Heart left ventricle (tissue), 16 donors: ENCODE measurements at regions of chr1 and their contacts with region 1.

Region 1: GRCh38 chr1:35769759-35770446 is at the start of gene CLSPN:
- DNase-seq: peak; percentile 95 to 96 (median 96)
- ATAC-seq: peak; percentile 99 to 100 (median 99)
- H3K4me3 ChIP-seq: peak within 1 kb of the TSS; percentile 59 to 97 (median 86)
- H3K27ac ChIP-seq: peak within 1 kb of the TSS in 11 of 12 donors; percentile 39 to 91 (median 77)
- H3K4me1 ChIP-seq: peaks cover 0 to 18% (median 4%) of the 10 kb centered on the region in 12 donors
- H3K27me3 ChIP-seq: no peaks in the 10 kb centered on the region
- CTCF ChIP-seq: no peak
- POLR2A ChIP-seq: peak in 1 of 2 donors; percentile 31
- total RNA-seq, gene CLSPN: 0.22 to 6.3 (median 0.35) TPM

Region 2: GRCh38 chr1:35451125-35451528 is 318.8 kb before region 1 on chr1:
- intact Hi-C with region 1: loop called in 3 of 10 experiments (anchors 5 to 10 kb)
- DNase-seq: peak; percentile 78 to 89 (median 83)
- ATAC-seq: peak; percentile 80 to 91 (median 86)
- H3K4me3 ChIP-seq: no peak overlapping the region
- H3K27ac ChIP-seq: peak overlapping the region in 4 of 12 donors; percentile 17 to 63 (median 50)
- H3K4me1 ChIP-seq: peaks cover 2 to 90% (median 29%) of the 10 kb centered on the region in 12 donors
- H3K27me3 ChIP-seq: no peaks in the 10 kb centered on the region
- CTCF ChIP-seq: peak; percentile 72 to 94 (median 82)
- POLR2A ChIP-seq: no peak

Region 3: DNA sequence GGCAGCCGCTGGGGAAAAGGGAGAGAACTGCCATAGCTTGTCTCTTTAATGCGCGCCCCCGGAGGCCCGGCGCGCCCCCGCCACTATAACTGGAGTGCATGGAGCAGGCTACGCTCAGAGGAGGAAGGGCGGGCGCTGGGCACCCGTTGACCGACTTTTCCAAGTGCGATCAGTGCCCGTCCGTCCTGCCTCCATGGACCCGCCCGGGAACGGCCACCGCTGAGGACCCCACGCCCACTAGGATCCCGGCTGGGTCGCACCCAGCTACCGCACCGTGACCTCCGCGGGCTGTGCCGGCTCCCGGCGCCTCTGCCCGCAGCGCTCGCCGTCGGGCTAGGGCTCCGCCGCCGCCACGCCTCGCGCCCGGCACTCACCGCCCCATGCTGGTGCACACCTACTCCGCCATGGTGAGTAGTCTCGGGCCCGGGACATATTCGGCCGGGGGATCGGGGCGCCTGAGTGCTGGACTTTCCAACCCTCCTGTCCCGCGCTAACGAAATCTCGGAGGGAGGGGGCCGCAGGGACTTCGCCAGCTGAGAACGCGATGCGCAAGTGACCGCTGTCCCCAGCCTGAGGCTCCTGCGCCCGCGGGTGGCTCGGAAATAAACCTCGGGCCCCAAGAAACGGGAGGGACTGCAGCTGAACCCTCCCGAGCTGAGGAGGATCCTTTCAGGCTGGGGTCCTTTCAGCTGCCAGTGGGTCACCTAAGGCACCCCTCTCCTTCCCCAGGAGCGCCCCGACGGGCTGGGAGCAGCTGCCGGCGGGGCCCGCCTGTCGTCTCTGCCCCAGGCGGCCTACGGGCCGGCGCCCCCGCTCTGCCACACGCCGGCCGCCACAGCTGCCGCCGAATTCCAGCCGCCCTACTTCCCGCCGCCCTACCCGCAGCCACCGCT is 196.5 kb before region 1 on chr1 and contains the start of gene TFAP2E:
- intact Hi-C with region 1: loop called in 9 of 10 experiments (anchors 1 to 5 kb)
- DNase-seq: peak in 1 of 5 donors; percentile 28
- ATAC-seq: peak in 3 of 4 donors; percentile 23 to 45 (median 38)
- H3K4me3 ChIP-seq: peak within 1 kb of the TSS; percentile 17 to 58 (median 44)
- H3K27ac ChIP-seq: no peak within 1 kb of the TSS
- H3K4me1 ChIP-seq: peaks cover 6 to 45% (median 18%) of the 10 kb centered on the region in 12 donors
- H3K27me3 ChIP-seq: peaks cover 27 to 90% (median 53%) of the 10 kb centered on the region in 9 donors
- CTCF ChIP-seq: no peak
- POLR2A ChIP-seq: no peak
- total RNA-seq, gene TFAP2E: 0.12 to 0.57 (median 0.41) TPM in 6 of 9 donors, not detected in the others

Region 4: GRCh38 chr1:35715568-35716002 is 54.3 kb before region 1 on chr1:
- intact Hi-C with region 1: loop called in 1 of 10 experiments (anchors 5 kb)
- DNase-seq: peak; percentile 61 to 77 (median 70)
- ATAC-seq: peak; percentile 46 to 64 (median 58)
- H3K4me3 ChIP-seq: peak overlapping the region in 3 of 12 donors; percentile 7 to 19 (median 12)
- H3K27ac ChIP-seq: no peak overlapping the region
- H3K4me1 ChIP-seq: peaks cover 0 to 38% (median 19%) of the 10 kb centered on the region in 12 donors
- H3K27me3 ChIP-seq: no peaks in the 10 kb centered on the region
- CTCF ChIP-seq: peak; percentile 64 to 91 (median 80)
- POLR2A ChIP-seq: no peak

Region 5: DNA sequence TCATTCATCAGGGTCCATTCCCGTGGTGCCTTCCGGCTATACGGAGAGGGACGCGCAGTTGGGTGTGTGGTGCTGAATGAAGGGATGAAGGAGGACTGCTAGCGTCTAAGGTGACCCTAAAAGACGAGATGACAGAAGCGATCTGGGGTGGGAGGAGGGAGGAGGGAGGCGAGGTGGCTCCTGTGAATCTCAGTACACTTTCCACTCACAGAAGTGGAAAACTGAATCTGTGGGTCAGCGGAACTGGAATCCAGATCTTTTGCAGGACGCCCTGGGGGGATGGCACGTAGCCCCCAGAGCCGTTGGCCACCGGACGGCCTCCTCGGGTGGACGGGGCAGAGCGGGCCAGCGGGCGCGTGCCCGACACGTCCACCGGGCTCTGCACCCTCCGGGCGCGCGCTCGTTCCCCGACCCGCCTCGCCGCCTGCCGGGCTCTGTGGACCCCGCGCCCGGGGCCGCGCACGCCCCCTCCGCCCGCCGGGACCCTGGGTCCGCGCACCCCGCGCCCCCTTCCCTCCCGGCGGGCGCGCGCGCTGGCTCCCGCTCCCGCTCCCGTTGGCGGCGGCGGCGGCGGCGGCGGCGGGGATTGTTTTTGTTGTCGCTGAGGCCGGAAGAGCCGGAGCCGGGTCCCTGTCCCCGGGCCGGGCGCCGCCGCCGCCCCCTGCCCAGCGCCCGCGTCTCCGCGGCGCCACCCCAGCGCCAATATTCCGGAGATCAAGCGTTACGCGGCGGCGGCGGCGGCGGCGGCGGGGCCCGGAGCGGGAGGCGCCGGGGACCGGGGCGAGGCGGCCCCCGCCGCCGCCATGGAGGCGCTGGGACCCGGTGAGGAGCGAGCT is 37.9 kb after region 1 on chr1 and contains the start of gene AGO4:
- intact Hi-C with region 1: loop called in 1 of 10 experiments (anchors 1 kb)
- DNase-seq: peak; percentile 64 to 86 (median 72)
- ATAC-seq: peak; percentile 62 to 85 (median 80)
- H3K4me3 ChIP-seq: peak within 1 kb of the TSS; percentile 80 to 97 (median 90)
- H3K27ac ChIP-seq: peak within 1 kb of the TSS; percentile 89 to 97 (median 92)
- H3K4me1 ChIP-seq: peaks cover 0 to 66% (median 20%) of the 10 kb centered on the region in 12 donors
- H3K27me3 ChIP-seq: no peaks in the 10 kb centered on the region
- CTCF ChIP-seq: peak in 1 of 12 donors; percentile 23
- POLR2A ChIP-seq: peak in 1 of 2 donors; percentile 31
- total RNA-seq, gene AGO4: 12.4 to 24.8 (median 18.8) TPM